ENCODE measurements at regions of chr1 and their contacts with region 1.

Region 1: DNA sequence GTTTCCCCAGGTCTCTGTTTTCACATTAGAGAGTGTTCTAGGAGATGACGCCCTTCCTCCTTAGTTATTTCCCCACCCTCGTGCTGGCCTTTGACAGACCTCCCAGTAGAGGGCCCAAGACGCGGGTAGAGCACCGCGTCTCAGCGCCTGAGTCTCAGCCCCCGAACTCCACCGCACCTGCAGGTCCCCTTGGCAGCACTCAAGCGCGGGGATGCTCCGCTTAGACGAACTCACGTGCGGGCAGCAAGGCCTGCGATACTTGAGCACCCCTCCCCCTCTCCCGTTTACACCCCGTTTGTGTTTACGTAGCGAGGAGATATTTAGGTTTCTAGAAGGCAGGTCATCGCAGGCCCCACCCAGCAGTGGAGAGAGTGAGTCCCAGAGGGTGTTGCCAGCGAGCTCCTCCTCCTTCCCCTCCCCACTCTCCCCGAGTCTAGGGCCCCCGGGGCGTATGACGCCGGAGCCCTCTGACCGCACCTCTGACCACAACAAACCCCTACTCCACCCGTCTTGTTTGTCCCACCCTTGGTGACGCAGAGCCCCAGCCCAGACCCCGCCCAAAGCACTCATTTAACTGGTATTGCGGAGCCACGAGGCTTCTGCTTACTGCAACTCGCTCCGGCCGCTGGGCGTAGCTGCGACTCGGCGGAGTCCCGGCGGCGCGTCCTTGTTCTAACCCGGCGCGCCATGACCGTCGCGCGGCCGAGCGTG is at the start of gene CD55:
- DNase-seq: peak; percentile 99
- H3K4me3 Mint-ChIP-seq: peak within 1 kb of the TSS; percentile 88
- H3K27ac Mint-ChIP-seq: peak within 1 kb of the TSS; percentile 99
- H3K4me1 Mint-ChIP-seq: peaks cover 33% of the 10 kb centered on the region
- H3K27me3 Mint-ChIP-seq: peaks cover 2% of the 10 kb centered on the region
- total RNA-seq, gene CD55: 177 and 178 TPM in 2 replicates

Region 2: DNA sequence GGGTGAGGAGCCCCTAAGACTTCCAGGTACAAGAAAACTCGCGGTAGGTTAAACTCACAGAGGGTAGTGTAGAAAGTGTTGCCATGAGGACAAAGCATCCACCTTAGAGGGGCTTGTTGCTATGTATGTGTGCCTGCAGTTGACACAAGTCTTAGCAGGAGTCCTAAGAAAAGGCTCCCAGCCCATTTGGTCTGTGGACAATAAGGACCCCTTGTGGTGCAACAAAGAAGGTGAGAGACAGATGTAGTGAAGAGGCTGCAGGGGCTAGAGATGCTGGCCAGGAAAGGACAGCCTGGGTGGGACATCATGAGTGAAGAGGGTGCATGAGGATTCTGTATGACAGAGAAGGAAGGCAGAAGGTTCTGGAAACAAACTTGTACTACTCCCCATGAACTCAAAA is 512.6 kb before region 1 on chr1:
- intact Hi-C with region 1: no loop called
- DNase-seq: peak; percentile 43
- H3K4me3 Mint-ChIP-seq: no peak overlapping the region
- H3K27ac Mint-ChIP-seq: peak overlapping the region; percentile 15
- H3K4me1 Mint-ChIP-seq: peaks cover 57% of the 10 kb centered on the region
- H3K27me3 Mint-ChIP-seq: peaks cover 13% of the 10 kb centered on the region

Region 3: DNA sequence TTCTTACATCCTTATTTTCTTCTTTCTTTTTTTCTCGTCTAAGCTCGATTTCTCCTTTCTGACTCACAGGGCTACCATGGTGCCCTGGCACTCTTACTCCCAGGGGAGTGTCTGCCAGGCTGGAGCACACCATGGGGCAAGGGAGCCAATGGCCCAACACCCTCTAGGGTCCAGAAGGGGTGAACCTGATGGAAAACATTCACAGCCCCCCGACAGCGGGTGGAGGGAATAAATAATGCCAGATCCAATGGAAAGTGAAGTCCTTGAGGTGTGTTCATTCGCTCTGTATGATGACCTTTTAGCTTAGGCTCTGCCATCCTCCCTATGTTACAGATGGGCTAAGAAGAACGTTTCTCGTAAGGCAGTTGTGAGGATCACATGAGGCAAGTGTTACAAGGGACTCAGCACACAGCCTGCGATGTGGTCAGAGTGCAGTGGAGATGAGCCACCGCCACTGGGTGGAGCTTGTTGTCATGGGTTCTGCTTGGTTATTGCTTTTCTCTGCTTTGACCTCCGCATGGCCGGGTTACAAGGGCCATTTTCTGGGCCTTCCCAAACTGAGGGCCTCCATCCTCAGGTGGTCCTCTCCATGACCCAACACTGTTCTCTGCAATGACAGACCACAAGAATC is 396.0 kb before region 1 on chr1:
- intact Hi-C with region 1: loop called (anchors 5 kb)
- DNase-seq: peak; percentile 36
- H3K4me3 Mint-ChIP-seq: no peak overlapping the region
- H3K27ac Mint-ChIP-seq: no peak overlapping the region
- H3K4me1 Mint-ChIP-seq: peaks cover 13% of the 10 kb centered on the region
- H3K27me3 Mint-ChIP-seq: no peaks in the 10 kb centered on the region

Region 4: DNA sequence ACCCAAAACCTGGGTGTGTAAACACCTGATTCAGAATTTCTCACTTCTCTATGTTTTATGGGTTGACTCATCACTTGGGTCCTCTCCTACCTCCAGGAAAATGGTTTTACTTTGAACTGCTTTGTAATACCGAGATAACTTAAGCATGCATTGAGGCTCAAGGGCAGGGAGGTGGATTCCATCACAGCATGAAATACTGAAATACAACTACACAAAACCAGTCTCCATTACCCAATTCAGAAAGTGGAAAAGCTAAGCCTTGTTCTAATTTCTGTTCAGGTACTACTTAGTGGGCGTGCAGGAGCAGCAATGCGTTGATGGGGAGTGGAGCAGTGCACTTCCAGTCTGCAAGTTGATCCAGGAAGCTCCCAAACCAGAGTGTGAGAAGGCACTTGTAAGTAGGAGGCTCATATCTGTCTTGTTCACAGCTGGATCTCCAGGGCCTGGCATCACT is 223.3 kb before region 1 on chr1:
- intact Hi-C with region 1: loop called (anchors 1 kb)
- DNase-seq: peak; percentile 50
- H3K4me3 Mint-ChIP-seq: peak overlapping the region; percentile 27
- H3K27ac Mint-ChIP-seq: peak overlapping the region; percentile 69
- H3K4me1 Mint-ChIP-seq: peaks cover 40% of the 10 kb centered on the region
- H3K27me3 Mint-ChIP-seq: no peaks in the 10 kb centered on the region

Region 5: GRCh38 chr1:207362962-207363858 is 42.0 kb after region 1 on chr1:
- intact Hi-C with region 1: loop called (anchors 1 kb)
- DNase-seq: no peak
- H3K4me3 Mint-ChIP-seq: no peak overlapping the region
- H3K27ac Mint-ChIP-seq: no peak overlapping the region
- H3K4me1 Mint-ChIP-seq: no peaks in the 10 kb centered on the region
- H3K27me3 Mint-ChIP-seq: no peaks in the 10 kb centered on the region

Region 6: GRCh38 chr1:207414606-207415108 is 93.4 kb after region 1 on chr1:
- intact Hi-C with region 1: loop called (anchors 2 kb)
- DNase-seq: no peak
- H3K4me3 Mint-ChIP-seq: no peak overlapping the region
- H3K27ac Mint-ChIP-seq: peak overlapping the region; percentile 35
- H3K4me1 Mint-ChIP-seq: peaks cover 33% of the 10 kb centered on the region
- H3K27me3 Mint-ChIP-seq: peaks cover 4% of the 10 kb centered on the region

Measured in activated T-helper 1 cell treated with anti-CD3 and anti-CD28 coated beads, Interleukin-12 subunit alpha, Interleukin-12 subunit beta, Interleukin-2, Interleukin-4 antibody, amounts not matched to agents 30 ng/mL and 10 ng/mL and 1 ng/mL, durations not matched to agents 14 hours and 24 hours and 36 hours (primary cell).